Activated CD8-positive, alpha-beta T cell treated with anti-CD3 and anti-CD28 coated beads, Interleukin-2, amount 10 ng/mL, durations not matched to agents 7 days and 5 days (primary cell): ENCODE measurements at regions of chr11 and their contacts with region 1.

Region 1: DNA sequence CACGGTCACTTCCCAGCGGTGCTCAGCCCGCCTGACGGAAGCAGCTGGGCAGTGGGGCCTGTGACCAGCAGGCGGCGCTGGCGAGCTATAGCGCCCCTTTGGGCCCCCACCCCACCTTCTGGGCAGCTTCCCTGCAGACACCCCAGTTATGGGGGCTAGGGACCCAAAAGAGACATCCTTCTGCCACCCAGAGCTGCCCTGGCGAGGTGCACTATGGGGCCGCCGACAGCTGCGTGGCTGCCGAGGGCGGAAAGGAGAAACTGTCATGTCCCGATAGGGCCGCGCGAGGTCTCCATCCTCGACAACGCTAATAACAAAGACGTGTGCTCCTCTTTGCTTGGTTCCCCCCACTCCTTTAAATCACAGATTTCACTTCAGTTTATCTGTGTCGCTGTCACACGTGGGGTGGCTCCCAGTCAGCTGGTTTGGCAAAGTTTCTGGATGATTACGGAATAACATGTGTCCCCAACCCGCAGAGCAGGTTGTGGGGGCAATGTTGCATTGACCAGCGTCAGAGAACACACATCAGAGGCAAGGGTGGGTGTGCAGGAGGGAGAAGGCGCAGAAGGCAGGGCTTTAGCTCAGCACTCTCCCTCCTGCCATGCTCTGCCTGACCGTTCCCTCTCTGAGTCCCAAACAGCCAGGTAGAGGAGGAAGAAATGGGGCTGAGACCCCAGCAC is 674 bp upstream of the MYO7A start:
- DNase-seq: peak; percentile 60
- ATAC-seq: peak; percentile 77
- H3K4me3 Mint-ChIP-seq: peak overlapping the region; percentile 28
- H3K27ac Mint-ChIP-seq: no peak overlapping the region
- H3K4me1 Mint-ChIP-seq: peaks cover 11% of the 10 kb centered on the region
- H3K27me3 Mint-ChIP-seq: peaks cover 8% of the 10 kb centered on the region

Region 2: GRCh38 chr11:76962583-76963416 is 164.6 kb before region 1 on chr11:
- CTCF ChIA-PET with region 1: no interaction called
- POLR2A ChIA-PET with region 1: no interaction called
- DNase-seq: no peak
- ATAC-seq: peak; percentile 68
- H3K4me3 Mint-ChIP-seq: no peak overlapping the region
- H3K27ac Mint-ChIP-seq: no peak overlapping the region
- H3K4me1 Mint-ChIP-seq: peaks cover 17% of the 10 kb centered on the region
- H3K27me3 Mint-ChIP-seq: no peaks in the 10 kb centered on the region

Region 3: GRCh38 chr11:77113382-77114088 is 13.8 kb before region 1 on chr11:
- CTCF ChIA-PET with region 1: interaction called, 19 read pairs
- POLR2A ChIA-PET with region 1: no interaction called
- DNase-seq: peak; percentile 54
- ATAC-seq: no peak
- H3K4me3 Mint-ChIP-seq: no peak overlapping the region
- H3K27ac Mint-ChIP-seq: no peak overlapping the region
- H3K4me1 Mint-ChIP-seq: peaks cover 4% of the 10 kb centered on the region
- H3K27me3 Mint-ChIP-seq: no peaks in the 10 kb centered on the region

Region 4: DNA sequence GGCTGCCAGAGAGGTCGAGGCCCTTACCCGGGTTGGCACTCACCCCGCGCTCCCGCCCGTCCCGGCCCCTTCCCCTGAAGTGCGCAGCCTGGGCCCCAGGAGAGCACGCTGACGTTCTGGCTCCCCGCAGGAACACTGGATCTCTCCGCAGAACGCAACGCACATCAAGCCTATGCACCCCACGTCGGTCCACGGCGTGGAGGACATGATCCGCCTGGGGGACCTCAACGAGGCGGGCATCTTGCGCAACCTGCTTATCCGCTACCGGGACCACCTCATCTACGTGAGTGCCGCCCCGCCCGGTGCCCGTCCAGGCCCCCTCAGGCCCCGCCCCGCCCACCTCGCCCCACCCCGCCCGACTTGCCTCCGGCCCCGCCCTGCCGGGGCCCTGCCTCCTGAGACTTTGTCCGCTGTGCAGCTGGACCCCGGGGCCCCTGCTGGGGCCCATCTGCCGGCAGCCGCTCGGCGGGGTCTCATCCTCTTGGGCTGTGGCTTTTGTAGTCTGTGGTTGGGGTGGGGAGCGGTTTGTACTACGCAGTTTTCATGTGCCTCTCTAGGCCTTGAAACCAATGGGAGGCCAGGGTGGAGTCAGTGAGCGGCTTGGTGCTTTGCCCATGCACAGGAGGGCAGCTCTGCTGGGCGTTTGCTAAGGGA is 20.4 kb after region 1 on chr11:
- CTCF ChIA-PET with region 1: interaction called, 23 read pairs
- POLR2A ChIA-PET with region 1: no interaction called
- DNase-seq: peak; percentile 65
- ATAC-seq: peak; percentile 56
- H3K4me3 Mint-ChIP-seq: peak overlapping the region; percentile 26
- H3K27ac Mint-ChIP-seq: no peak overlapping the region
- H3K4me1 Mint-ChIP-seq: peaks cover 43% of the 10 kb centered on the region
- H3K27me3 Mint-ChIP-seq: peaks cover 58% of the 10 kb centered on the region

Region 5: DNA sequence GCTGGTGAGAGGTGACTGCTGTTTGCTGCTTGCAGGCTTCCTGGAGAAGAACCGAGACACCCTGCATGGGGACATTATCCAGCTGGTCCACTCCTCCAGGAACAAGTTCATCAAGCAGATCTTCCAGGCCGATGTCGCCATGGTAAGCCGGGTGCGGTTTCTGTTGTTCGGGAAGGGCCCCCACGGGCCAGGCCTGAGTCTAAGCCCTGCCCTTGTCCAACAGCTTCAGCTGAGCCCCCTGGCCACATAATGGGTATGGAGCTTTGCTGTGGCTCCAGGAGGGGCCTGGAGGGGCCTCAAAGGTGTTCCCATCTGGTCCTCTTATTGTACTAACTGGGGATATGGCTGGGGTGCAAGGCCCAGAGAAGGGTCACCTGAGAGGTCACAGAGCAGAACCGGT is 38.6 kb after region 1 on chr11:
- CTCF ChIA-PET with region 1: interaction called, 11 read pairs
- POLR2A ChIA-PET with region 1: no interaction called
- DNase-seq: no peak
- ATAC-seq: no peak
- H3K4me3 Mint-ChIP-seq: no peak overlapping the region
- H3K27ac Mint-ChIP-seq: no peak overlapping the region
- H3K4me1 Mint-ChIP-seq: no peaks in the 10 kb centered on the region
- H3K27me3 Mint-ChIP-seq: peaks cover 21% of the 10 kb centered on the region

Region 6: GRCh38 chr11:77195171-77195751 is 67.9 kb after region 1 on chr11:
- CTCF ChIA-PET with region 1: interaction called, 12 read pairs
- POLR2A ChIA-PET with region 1: no interaction called
- DNase-seq: no peak
- ATAC-seq: no peak
- H3K4me3 Mint-ChIP-seq: no peak overlapping the region
- H3K27ac Mint-ChIP-seq: no peak overlapping the region
- H3K4me1 Mint-ChIP-seq: no peaks in the 10 kb centered on the region
- H3K27me3 Mint-ChIP-seq: no peaks in the 10 kb centered on the region

Region 7: GRCh38 chr11:77619576-77620198 is 492.3 kb after region 1 on chr11:
- CTCF ChIA-PET with region 1: interaction called, 15 read pairs
- POLR2A ChIA-PET with region 1: no interaction called
- DNase-seq: peak; percentile 46
- ATAC-seq: no peak
- H3K4me3 Mint-ChIP-seq: no peak overlapping the region
- H3K27ac Mint-ChIP-seq: no peak overlapping the region
- H3K4me1 Mint-ChIP-seq: no peaks in the 10 kb centered on the region
- H3K27me3 Mint-ChIP-seq: no peaks in the 10 kb centered on the region